Activated T-helper 2 cell treated with anti-CD3 and anti-CD28 coated beads, Interferon-gamma antibody, Interleukin-2, Interleukin-4, amounts not matched to agents 10 μg/mL and 5 μg/mL and 100 μg/mL, durations not matched to agents 14 hours and 24 hours and 36 hours (primary cell): ENCODE measurements at regions of chr13 and their contacts with region 1.

Region 1: DNA sequence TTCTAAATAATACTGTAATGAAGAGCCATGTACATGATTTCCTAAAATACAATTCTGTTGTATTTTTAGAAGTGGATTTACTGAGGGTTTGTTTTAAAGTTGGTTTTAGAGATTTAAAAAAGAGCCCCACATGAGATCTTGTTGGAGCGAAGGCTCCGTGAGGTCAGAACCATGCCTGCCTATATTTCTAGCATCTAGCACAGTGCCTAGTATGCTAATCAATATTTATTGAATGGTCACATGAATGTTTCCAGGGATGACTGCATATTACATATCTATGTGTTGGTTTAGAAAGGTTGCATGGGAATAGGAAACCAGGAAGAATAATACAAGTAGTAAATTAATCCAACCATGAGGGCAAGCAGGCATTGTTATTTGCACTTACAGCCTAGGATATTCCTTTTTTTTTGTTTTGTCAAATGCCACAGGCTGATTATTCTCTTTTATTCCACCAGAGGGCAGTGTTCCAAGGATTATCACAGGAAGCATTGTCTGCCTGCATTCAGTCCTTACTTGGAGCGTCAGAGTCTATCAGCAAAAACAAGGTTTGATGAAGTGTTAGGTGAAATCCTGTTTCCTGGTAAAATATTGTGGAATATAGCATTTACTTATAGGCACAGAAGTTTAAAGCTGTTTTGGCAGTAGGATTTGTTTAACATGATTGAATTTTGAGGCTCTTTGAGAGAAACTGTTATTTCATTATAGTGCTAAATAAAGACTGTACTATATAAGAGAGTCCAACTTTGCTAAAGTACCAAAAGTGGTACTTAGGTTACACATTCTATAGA is 46.8 kb downstream of the COG3 start:
- DNase-seq: no peak
- H3K4me3 Mint-ChIP-seq: no peak overlapping the region
- H3K27ac Mint-ChIP-seq: no peak overlapping the region
- H3K4me1 Mint-ChIP-seq: peaks cover 7% of the 10 kb centered on the region
- H3K27me3 Mint-ChIP-seq: no peaks in the 10 kb centered on the region

Region 2: GRCh38 chr13:45473627-45474026 is 37.9 kb before region 1 on chr13:
- intact Hi-C with region 1: no loop called
- DNase-seq: no peak
- H3K4me3 Mint-ChIP-seq: no peak overlapping the region
- H3K27ac Mint-ChIP-seq: no peak overlapping the region
- H3K4me1 Mint-ChIP-seq: peaks cover 32% of the 10 kb centered on the region
- H3K27me3 Mint-ChIP-seq: no peaks in the 10 kb centered on the region

Region 3: DNA sequence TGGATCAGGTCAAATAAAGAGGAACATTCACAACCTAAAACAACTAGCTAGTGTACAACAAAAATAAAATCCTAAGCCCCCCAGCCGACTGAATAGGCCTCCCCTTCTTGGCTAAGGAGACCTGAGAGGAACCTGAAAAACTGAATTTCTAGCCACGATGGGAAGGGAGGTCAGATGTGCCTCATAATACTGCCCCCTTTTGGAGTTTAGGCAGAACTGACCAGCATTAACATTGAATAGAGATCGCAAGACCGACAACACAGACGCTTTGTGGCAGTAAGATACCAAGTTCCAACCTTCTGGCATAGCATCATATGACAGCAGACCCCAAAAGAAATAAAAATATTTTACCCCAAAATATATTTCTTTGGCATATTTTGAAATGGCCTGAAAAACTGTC is 206.6 kb after region 1 on chr13:
- intact Hi-C with region 1: loop called (anchors 1 kb)
- DNase-seq: no peak
- H3K4me3 Mint-ChIP-seq: no peak overlapping the region
- H3K27ac Mint-ChIP-seq: no peak overlapping the region
- H3K4me1 Mint-ChIP-seq: no peaks in the 10 kb centered on the region
- H3K27me3 Mint-ChIP-seq: peaks cover 9% of the 10 kb centered on the region

Region 4: GRCh38 chr13:46146899-46147298 is 635.4 kb after region 1 on chr13:
- intact Hi-C with region 1: loop called (anchors 10 kb)
- DNase-seq: no peak
- H3K4me3 Mint-ChIP-seq: no peak overlapping the region
- H3K27ac Mint-ChIP-seq: no peak overlapping the region
- H3K4me1 Mint-ChIP-seq: peaks cover 23% of the 10 kb centered on the region
- H3K27me3 Mint-ChIP-seq: no peaks in the 10 kb centered on the region